Activated CD8-positive, alpha-beta T cell treated with anti-CD3 and anti-CD28 coated beads, Interleukin-2, amount 10 ng/mL, durations not matched to agents 7 days and 5 days (primary cell): ENCODE measurements at regions of chr15 and their contacts with region 1.

Region 1: DNA sequence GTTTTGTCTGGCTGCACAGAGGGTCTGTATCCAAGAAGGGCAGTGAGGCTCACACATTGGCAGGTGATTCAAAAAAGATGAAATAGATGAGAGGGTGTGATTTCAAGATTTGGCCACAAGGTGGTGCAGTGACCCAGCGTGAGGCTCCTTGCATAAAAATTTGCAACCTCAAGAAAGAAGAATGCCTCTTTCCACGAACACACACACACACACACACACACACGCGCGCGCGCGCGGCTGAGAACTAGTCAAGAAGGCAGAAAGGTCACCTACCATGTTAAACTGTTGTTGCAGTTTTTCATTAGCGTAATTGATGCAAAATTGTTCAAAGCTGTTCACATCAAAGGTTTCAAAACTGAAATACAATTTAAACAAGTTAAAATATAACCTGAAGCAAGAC is 39.2 kb downstream of the MYO5C start:
- DNase-seq: peak; percentile 89
- ATAC-seq: peak; percentile 47
- H3K4me3 Mint-ChIP-seq: peak overlapping the region; percentile 67
- H3K27ac Mint-ChIP-seq: peak overlapping the region; percentile 83
- H3K4me1 Mint-ChIP-seq: peaks cover 50% of the 10 kb centered on the region
- H3K27me3 Mint-ChIP-seq: no peaks in the 10 kb centered on the region

Region 2: DNA sequence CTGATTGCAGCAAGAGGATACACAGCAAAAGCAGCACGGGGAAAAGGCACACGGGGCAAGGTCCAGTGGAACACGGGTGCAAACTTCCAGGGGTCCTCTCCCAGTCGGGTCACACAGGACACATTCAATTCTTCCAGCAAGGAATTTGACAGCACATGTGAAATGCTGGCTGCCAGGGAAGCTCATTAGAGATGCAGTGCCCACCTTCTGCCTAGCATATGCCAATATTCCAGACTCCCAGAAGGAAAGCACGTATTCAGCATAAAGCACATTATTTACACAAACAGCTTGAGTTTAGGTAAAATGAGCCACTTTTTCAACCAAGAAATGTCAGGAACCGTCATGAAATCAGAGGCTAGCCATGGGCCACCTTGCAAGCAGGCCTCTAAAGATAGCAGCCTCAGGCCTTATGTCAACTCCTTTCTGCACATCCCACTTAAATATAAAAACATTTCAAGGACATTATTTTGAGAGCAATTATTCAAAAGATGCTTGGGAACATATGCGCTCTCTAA is 19.9 kb after region 1 on chr15:
- CTCF ChIA-PET with region 1: interaction called, 17 read pairs
- POLR2A ChIA-PET with region 1: interaction called, 6 read pairs
- DNase-seq: no peak
- ATAC-seq: no peak
- H3K4me3 Mint-ChIP-seq: no peak overlapping the region
- H3K27ac Mint-ChIP-seq: no peak overlapping the region
- H3K4me1 Mint-ChIP-seq: no peaks in the 10 kb centered on the region
- H3K27me3 Mint-ChIP-seq: peaks cover 18% of the 10 kb centered on the region

Region 3: GRCh38 chr15:52288051-52288942 is 31.9 kb after region 1 on chr15:
- CTCF ChIA-PET with region 1: interaction called, 10 read pairs
- POLR2A ChIA-PET with region 1: interaction called, 3 read pairs
- DNase-seq: no peak
- ATAC-seq: no peak
- H3K4me3 Mint-ChIP-seq: no peak overlapping the region
- H3K27ac Mint-ChIP-seq: no peak overlapping the region
- H3K4me1 Mint-ChIP-seq: peaks cover 35% of the 10 kb centered on the region
- H3K27me3 Mint-ChIP-seq: peaks cover 13% of the 10 kb centered on the region

Region 4: GRCh38 chr15:52331490-52332240 is 75.3 kb after region 1 on chr15:
- CTCF ChIA-PET with region 1: interaction called, 73 read pairs
- POLR2A ChIA-PET with region 1: interaction called, 3 read pairs
- DNase-seq: peak; percentile 81
- ATAC-seq: peak; percentile 100
- H3K4me3 Mint-ChIP-seq: peak overlapping the region; percentile 50
- H3K27ac Mint-ChIP-seq: peak overlapping the region; percentile 89
- H3K4me1 Mint-ChIP-seq: peaks cover 39% of the 10 kb centered on the region
- H3K27me3 Mint-ChIP-seq: no peaks in the 10 kb centered on the region

Region 5: DNA sequence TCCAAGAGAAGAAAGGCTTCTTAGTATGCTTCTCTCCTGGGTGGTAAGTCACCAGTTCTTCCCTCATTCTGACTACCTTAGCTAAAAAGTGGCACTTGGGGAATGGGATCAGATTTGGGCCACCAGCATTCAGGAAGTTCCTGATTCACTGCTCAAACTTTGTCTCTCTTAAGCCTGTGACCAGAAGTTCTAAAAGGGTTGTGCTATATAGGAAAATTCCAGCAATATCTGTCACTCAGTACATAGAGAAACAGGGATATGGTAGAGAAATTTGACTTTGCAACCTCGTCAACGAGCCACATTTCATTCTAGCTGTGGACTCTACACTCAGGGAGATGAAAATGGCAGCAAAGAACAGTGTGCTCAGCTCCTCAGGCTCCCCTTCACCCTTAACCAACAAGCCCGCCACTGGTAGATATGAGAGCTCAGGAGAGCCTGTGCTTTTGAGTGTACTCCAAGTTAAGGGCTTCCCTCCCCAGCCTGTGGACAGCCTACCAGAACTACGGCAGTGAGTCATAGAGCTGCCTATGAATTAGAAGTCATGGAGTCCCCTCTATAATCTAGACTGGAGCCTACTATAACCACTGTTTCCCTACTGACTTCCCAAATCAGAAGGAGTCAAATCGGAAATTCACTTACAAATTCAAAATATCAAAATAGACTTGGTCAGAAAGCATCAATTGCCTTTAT is 91.8 kb after region 1 on chr15:
- CTCF ChIA-PET with region 1: no interaction called
- POLR2A ChIA-PET with region 1: no interaction called
- DNase-seq: no peak
- ATAC-seq: no peak
- H3K4me3 Mint-ChIP-seq: no peak overlapping the region
- H3K27ac Mint-ChIP-seq: peak overlapping the region; percentile 30
- H3K4me1 Mint-ChIP-seq: no peaks in the 10 kb centered on the region
- H3K27me3 Mint-ChIP-seq: no peaks in the 10 kb centered on the region

Region 6: DNA sequence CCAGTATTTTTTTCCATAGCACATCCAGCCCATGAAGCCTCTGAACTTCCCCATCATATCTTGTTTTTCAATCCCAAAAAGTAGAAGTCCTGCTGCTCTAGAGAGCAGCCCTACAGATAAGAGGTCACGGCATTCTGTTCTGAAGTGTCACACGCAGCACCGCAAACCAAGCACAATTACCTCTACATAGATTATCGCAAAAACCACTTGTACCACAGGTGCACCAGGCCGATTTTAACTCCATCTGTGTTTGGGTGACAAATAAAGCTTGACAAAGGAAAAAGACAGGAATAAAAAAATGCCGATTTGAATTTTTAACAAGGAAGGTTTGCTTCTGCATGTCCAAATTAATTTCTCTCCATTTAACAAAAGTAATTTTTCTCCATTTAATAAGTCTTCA is 158.6 kb after region 1 on chr15:
- CTCF ChIA-PET with region 1: no interaction called
- POLR2A ChIA-PET with region 1: no interaction called
- DNase-seq: no peak
- ATAC-seq: no peak
- H3K4me3 Mint-ChIP-seq: no peak overlapping the region
- H3K27ac Mint-ChIP-seq: no peak overlapping the region
- H3K4me1 Mint-ChIP-seq: peaks cover 5% of the 10 kb centered on the region
- H3K27me3 Mint-ChIP-seq: no peaks in the 10 kb centered on the region

Region 7: GRCh38 chr15:52528991-52529926 is 272.9 kb after region 1 on chr15:
- CTCF ChIA-PET with region 1: interaction called, 12 read pairs
- POLR2A ChIA-PET with region 1: no interaction called
- DNase-seq: peak; percentile 85
- ATAC-seq: peak; percentile 89
- H3K4me3 Mint-ChIP-seq: peak overlapping the region; percentile 70
- H3K27ac Mint-ChIP-seq: peak overlapping the region; percentile 81
- H3K4me1 Mint-ChIP-seq: peaks cover 36% of the 10 kb centered on the region
- H3K27me3 Mint-ChIP-seq: peaks cover 25% of the 10 kb centered on the region

Region 8: GRCh38 chr15:52730173-52730572 is 473.8 kb after region 1 on chr15:
- CTCF ChIA-PET with region 1: interaction called, 106 read pairs
- POLR2A ChIA-PET with region 1: interaction called, 3 read pairs
- DNase-seq: peak; percentile 48
- ATAC-seq: peak; percentile 64
- H3K4me3 Mint-ChIP-seq: no peak overlapping the region
- H3K27ac Mint-ChIP-seq: peak overlapping the region; percentile 80
- H3K4me1 Mint-ChIP-seq: peaks cover 33% of the 10 kb centered on the region
- H3K27me3 Mint-ChIP-seq: no peaks in the 10 kb centered on the region

Region 9: DNA sequence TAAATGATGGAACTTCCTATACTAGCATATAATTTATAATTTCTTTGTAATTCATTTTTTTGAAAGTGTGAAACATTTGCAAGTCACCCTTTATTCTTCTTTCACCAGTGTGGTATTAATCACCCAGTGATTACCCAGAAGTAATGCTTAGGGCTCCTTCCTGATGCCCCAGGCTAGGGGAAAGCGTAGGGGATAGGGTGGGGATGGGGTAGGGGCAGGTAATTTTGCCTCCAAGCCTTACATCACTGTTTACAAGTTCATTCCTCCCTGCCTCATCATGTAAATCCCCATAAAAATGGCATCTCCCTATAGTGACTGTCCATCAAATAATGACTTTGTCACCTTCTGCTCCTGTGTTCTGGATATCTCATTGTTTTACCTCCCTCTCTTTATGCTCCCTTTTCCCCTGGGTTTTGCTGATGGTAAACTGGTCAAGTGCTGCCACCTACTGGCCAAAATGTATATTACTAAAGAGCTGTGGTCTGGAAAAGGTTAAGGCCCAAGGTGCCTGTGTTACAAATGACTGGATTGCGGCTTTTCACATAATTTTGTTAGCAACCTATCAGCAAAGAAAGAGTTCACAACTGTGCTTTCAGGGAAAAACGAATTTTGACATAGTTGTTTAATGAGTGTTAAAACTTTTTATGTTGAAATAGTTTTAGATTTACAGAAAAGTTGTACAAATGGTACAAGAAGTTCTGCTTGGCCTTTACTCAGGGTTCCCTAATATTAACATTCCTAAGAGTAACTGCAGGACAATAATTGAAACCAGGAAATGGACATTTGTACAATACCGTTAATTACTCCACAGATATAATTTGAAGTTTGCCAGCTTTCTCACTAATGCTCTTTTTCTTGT is 479.1 kb after region 1 on chr15:
- CTCF ChIA-PET with region 1: interaction called, 106 read pairs
- POLR2A ChIA-PET with region 1: interaction called, 3 read pairs
- DNase-seq: peak; percentile 86
- ATAC-seq: peak; percentile 91
- H3K4me3 Mint-ChIP-seq: no peak overlapping the region
- H3K27ac Mint-ChIP-seq: no peak overlapping the region
- H3K4me1 Mint-ChIP-seq: peaks cover 26% of the 10 kb centered on the region
- H3K27me3 Mint-ChIP-seq: peaks cover 14% of the 10 kb centered on the region